CD8-positive, alpha-beta T cell (primary cell): ENCODE measurements at regions of chr13 and their contacts with region 1.

Region 1: GRCh38 chr13:46553886-46554858 is 1.2 kb downstream of the LRCH1 start:
- DNase-seq: peak; percentile 29 to 91 (median 66)
- ATAC-seq: peak; percentile 54
- H3K4me3 ChIP-seq: peak overlapping the region; percentile 87 to 95
- H3K4me3 Mint-ChIP-seq: peak overlapping the region; percentile 93
- H3K27ac ChIP-seq: peak overlapping the region; percentile 70 to 83
- H3K27ac Mint-ChIP-seq: peak overlapping the region; percentile 94
- H3K4me1 ChIP-seq: peaks cover 28% of the 10 kb centered on the region
- H3K4me1 Mint-ChIP-seq: peaks cover 53% of the 10 kb centered on the region
- H3K27me3 ChIP-seq: no peaks in the 10 kb centered on the region
- H3K27me3 Mint-ChIP-seq: no peaks in the 10 kb centered on the region
- CTCF ChIP-seq: no peak

Region 2: DNA sequence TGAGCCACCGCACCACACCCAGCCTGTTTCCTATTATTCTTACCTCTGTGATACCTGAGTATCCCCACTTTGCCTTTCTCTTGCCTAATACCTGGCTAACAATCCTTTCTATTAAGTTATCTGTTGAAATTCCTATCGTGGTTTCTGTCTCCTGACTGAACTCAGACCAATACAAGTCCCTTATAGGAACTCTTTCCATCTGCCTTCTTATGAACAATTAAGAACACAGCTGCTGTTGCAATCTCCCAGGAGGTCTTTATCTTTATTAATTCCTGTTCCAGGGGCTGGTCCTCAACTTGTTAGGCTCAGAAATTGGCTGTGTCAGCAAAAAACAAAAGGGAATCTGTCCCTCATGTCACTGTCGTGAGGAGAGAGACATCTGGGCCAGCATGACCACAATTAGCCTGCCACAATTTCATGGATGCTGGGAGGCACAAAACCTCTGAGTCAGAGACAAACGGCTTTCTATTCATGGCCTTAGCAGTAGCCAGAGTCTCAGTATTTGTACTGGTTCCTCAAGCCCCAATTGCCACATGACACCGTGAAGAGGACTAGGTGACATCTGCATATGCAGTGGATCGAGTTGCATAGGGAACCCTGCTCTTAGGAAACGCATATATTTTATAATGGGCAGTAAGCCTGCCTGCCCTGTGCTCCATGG is 1623.1 kb before region 1 on chr13:
- CTCF ChIA-PET with region 1: no interaction called
- POLR2A ChIA-PET with region 1: no interaction called
- intact Hi-C with region 1: no loop called
- DNase-seq: no peak
- ATAC-seq: no peak
- H3K4me3 ChIP-seq: no peak overlapping the region
- H3K4me3 Mint-ChIP-seq: no peak overlapping the region
- H3K27ac ChIP-seq: no peak overlapping the region
- H3K27ac Mint-ChIP-seq: no peak overlapping the region
- H3K4me1 ChIP-seq: no peaks in the 10 kb centered on the region
- H3K4me1 Mint-ChIP-seq: no peaks in the 10 kb centered on the region
- H3K27me3 ChIP-seq: no peaks in the 10 kb centered on the region
- H3K27me3 Mint-ChIP-seq: peaks cover 11% of the 10 kb centered on the region
- CTCF ChIP-seq: no peak

Region 3: GRCh38 chr13:45683701-45684100 is 870.5 kb before region 1 on chr13:
- CTCF ChIA-PET with region 1: no interaction called
- POLR2A ChIA-PET with region 1: no interaction called
- intact Hi-C with region 1: no loop called
- DNase-seq: peak in 2 of 9 experiments; percentile 4 to 7
- ATAC-seq: no peak
- H3K4me3 ChIP-seq: no peak overlapping the region
- H3K4me3 Mint-ChIP-seq: no peak overlapping the region
- H3K27ac ChIP-seq: no peak overlapping the region
- H3K27ac Mint-ChIP-seq: no peak overlapping the region
- H3K4me1 ChIP-seq: no peaks in the 10 kb centered on the region
- H3K4me1 Mint-ChIP-seq: peaks cover 4% of the 10 kb centered on the region
- H3K27me3 ChIP-seq: no peaks in the 10 kb centered on the region
- H3K27me3 Mint-ChIP-seq: peaks cover 2% of the 10 kb centered on the region
- CTCF ChIP-seq: no peak

Region 4: DNA sequence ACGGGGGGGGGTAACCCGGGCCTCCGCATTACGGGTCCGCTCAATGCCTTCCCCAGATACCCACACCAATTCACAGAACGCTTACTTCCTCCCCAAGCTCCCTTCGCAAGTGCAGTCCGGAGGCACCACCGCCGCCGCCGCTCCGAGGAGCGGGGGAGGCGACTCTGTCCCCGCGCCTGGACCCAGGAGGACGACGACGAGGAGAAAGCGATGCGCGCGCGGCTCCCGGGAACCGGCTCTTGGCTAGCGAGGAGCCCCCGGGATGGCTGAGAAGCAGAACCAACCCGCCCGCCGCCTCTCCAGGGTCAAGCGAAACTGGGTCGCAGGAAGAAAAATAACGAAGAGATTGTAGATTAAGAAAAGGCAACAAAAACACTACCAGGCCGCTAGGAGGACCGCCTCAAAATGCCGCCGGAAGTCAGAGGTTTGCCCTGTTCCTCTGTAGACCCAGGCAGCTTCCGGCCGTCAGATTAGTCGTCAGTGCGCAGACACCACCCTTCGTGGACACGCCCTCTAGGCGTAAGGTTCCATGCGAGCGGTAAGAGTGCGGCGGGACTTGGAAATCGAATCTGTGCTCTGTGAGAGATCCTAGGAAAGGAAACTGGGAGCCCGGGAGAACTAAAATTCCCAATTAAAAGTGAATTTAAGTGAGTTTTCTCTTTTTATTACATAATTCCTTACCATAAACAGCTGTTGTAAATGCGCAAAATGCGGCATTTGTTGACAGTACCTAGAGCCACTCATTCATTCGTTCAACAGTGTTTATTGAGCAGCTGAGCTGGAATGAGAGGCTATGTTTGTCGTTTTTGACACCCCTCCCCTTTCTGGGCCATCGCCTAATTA is 501.6 kb before region 1 on chr13 and contains the start of gene ZC3H13:
- CTCF ChIA-PET with region 1: no interaction called
- POLR2A ChIA-PET with region 1: no interaction called
- intact Hi-C with region 1: loop called in 1 of 2 experiments (anchors 2 kb)
- DNase-seq: peak; percentile 84 to 97 (median 91)
- ATAC-seq: peak; percentile 97
- H3K4me3 ChIP-seq: peak within 1 kb of the TSS; percentile 77 to 89
- H3K4me3 Mint-ChIP-seq: peak within 1 kb of the TSS; percentile 88
- H3K27ac ChIP-seq: peak within 1 kb of the TSS; percentile 89 to 98
- H3K27ac Mint-ChIP-seq: peak within 1 kb of the TSS; percentile 94
- H3K4me1 ChIP-seq: peaks cover 23% of the 10 kb centered on the region
- H3K4me1 Mint-ChIP-seq: peaks cover 46% of the 10 kb centered on the region
- H3K27me3 ChIP-seq: no peaks in the 10 kb centered on the region
- H3K27me3 Mint-ChIP-seq: peaks cover 6% of the 10 kb centered on the region
- CTCF ChIP-seq: peak; percentile 37
- total RNA-seq, gene ZC3H13: 50.7 to 54.2 TPM

Region 5: GRCh38 chr13:46571189-46571908 is 17.2 kb after region 1 on chr13:
- CTCF ChIA-PET with region 1: interaction called, 11 read pairs
- POLR2A ChIA-PET with region 1: no interaction called
- intact Hi-C with region 1: no loop called
- DNase-seq: no peak
- ATAC-seq: no peak
- H3K4me3 ChIP-seq: no peak overlapping the region
- H3K4me3 Mint-ChIP-seq: no peak overlapping the region
- H3K27ac ChIP-seq: no peak overlapping the region
- H3K27ac Mint-ChIP-seq: no peak overlapping the region
- H3K4me1 ChIP-seq: no peaks in the 10 kb centered on the region
- H3K4me1 Mint-ChIP-seq: peaks cover 42% of the 10 kb centered on the region
- H3K27me3 ChIP-seq: no peaks in the 10 kb centered on the region
- H3K27me3 Mint-ChIP-seq: no peaks in the 10 kb centered on the region
- CTCF ChIP-seq: no peak

Region 6: DNA sequence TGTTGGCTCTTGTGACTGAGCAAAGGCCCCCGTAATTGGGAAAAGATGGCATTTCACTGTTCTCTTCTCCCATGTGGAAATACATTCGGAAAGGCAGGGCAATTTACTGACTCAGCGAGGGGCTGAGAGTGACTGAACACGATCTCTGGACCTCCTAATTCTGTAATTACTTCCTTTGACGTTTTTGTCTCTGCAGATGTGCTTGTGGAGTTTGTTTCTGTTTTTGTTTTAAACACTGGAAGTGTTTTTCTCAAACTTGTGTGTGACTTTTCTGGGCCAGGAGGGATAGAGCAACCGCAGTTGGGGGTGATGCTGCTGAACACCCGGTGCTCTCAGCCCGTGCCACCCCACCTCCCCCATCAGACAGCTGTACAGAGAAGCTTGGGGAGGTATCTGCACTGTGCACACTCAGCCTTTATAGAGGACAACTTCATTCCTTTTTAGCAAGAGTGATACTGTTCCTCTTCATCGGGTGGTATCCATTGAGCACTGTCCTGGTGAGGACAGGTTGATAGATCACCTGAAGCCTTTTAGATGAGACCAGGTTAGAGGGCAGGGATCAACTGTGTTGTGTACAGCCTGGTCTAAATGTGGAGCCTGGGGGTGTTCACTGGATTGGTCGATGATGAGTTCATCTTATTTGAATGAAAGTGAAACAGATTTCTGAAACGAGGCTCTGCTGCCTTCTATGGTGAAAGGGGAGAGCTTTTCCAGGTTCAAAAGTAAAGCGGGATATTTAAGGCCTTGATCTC is 125.4 kb after region 1 on chr13:
- CTCF ChIA-PET with region 1: interaction called, 16 read pairs
- POLR2A ChIA-PET with region 1: no interaction called
- intact Hi-C with region 1: loop called (anchors 1 to 2 kb)
- DNase-seq: peak in 8 of 9 experiments; percentile 12 to 79 (median 38)
- ATAC-seq: peak; percentile 92
- H3K4me3 ChIP-seq: peak overlapping the region; percentile 25 to 33
- H3K4me3 Mint-ChIP-seq: no peak overlapping the region
- H3K27ac ChIP-seq: peak overlapping the region; percentile 56 to 73
- H3K27ac Mint-ChIP-seq: no peak overlapping the region
- H3K4me1 ChIP-seq: peaks cover 18% of the 10 kb centered on the region
- H3K4me1 Mint-ChIP-seq: peaks cover 5% of the 10 kb centered on the region
- H3K27me3 ChIP-seq: no peaks in the 10 kb centered on the region
- H3K27me3 Mint-ChIP-seq: no peaks in the 10 kb centered on the region
- CTCF ChIP-seq: no peak

Region 7: DNA sequence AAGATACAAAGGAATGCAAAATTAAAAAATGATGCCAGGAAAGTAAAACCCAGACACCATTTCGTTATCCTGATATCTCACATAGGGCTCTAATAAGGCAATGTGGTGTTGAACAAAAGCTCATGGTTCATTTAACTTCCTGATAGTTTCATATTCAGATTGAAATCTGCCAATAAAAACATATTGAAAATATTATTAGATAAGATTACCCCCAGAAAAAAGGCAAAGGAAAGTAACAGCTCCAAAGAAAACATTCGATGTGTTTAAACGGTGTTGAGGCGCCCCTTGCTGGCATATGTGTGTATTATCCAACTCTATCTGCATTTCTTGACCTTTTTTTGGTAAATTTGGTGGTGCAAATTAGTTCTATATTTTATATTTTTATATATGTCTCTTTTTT is 166.9 kb after region 1 on chr13:
- CTCF ChIA-PET with region 1: interaction called, 94 read pairs
- POLR2A ChIA-PET with region 1: interaction called, 3 read pairs
- intact Hi-C with region 1: loop called (anchors 1 kb)
- DNase-seq: peak in 8 of 9 experiments; percentile 1 to 67 (median 50)
- ATAC-seq: peak; percentile 38
- H3K4me3 ChIP-seq: no peak overlapping the region
- H3K4me3 Mint-ChIP-seq: no peak overlapping the region
- H3K27ac ChIP-seq: no peak overlapping the region
- H3K27ac Mint-ChIP-seq: no peak overlapping the region
- H3K4me1 ChIP-seq: no peaks in the 10 kb centered on the region
- H3K4me1 Mint-ChIP-seq: no peaks in the 10 kb centered on the region
- H3K27me3 ChIP-seq: no peaks in the 10 kb centered on the region
- H3K27me3 Mint-ChIP-seq: no peaks in the 10 kb centered on the region
- CTCF ChIP-seq: peak; percentile 92

Region 8: GRCh38 chr13:46782691-46783090 is 228.5 kb after region 1 on chr13:
- CTCF ChIA-PET with region 1: no interaction called
- POLR2A ChIA-PET with region 1: no interaction called
- intact Hi-C with region 1: no loop called
- DNase-seq: no peak
- ATAC-seq: no peak
- H3K4me3 ChIP-seq: no peak overlapping the region
- H3K4me3 Mint-ChIP-seq: no peak overlapping the region
- H3K27ac ChIP-seq: no peak overlapping the region
- H3K27ac Mint-ChIP-seq: no peak overlapping the region
- H3K4me1 ChIP-seq: no peaks in the 10 kb centered on the region
- H3K4me1 Mint-ChIP-seq: peaks cover 2% of the 10 kb centered on the region
- H3K27me3 ChIP-seq: no peaks in the 10 kb centered on the region
- H3K27me3 Mint-ChIP-seq: no peaks in the 10 kb centered on the region
- CTCF ChIP-seq: no peak

Region 9: GRCh38 chr13:48037346-48038173 is 1483.4 kb after region 1 on chr13 and contains the start of gene NUDT15:
- CTCF ChIA-PET with region 1: no interaction called
- POLR2A ChIA-PET with region 1: no interaction called
- intact Hi-C with region 1: loop called in 1 of 2 experiments (anchors 2 kb)
- DNase-seq: peak; percentile 88 to 99 (median 97)
- ATAC-seq: peak; percentile 90
- H3K4me3 ChIP-seq: peak within 1 kb of the TSS; percentile 81 to 96
- H3K4me3 Mint-ChIP-seq: peak within 1 kb of the TSS; percentile 97
- H3K27ac ChIP-seq: peak within 1 kb of the TSS; percentile 99
- H3K27ac Mint-ChIP-seq: peak within 1 kb of the TSS; percentile 98
- H3K4me1 ChIP-seq: peaks cover 20% of the 10 kb centered on the region
- H3K4me1 Mint-ChIP-seq: peaks cover 32% of the 10 kb centered on the region
- H3K27me3 ChIP-seq: no peaks in the 10 kb centered on the region
- H3K27me3 Mint-ChIP-seq: no peaks in the 10 kb centered on the region
- CTCF ChIP-seq: peak; percentile 99
- total RNA-seq, gene NUDT15: 23.8 to 24.9 TPM